ENCODE measurements at regions of chr17 and their contacts with region 1.

Region 1: DNA sequence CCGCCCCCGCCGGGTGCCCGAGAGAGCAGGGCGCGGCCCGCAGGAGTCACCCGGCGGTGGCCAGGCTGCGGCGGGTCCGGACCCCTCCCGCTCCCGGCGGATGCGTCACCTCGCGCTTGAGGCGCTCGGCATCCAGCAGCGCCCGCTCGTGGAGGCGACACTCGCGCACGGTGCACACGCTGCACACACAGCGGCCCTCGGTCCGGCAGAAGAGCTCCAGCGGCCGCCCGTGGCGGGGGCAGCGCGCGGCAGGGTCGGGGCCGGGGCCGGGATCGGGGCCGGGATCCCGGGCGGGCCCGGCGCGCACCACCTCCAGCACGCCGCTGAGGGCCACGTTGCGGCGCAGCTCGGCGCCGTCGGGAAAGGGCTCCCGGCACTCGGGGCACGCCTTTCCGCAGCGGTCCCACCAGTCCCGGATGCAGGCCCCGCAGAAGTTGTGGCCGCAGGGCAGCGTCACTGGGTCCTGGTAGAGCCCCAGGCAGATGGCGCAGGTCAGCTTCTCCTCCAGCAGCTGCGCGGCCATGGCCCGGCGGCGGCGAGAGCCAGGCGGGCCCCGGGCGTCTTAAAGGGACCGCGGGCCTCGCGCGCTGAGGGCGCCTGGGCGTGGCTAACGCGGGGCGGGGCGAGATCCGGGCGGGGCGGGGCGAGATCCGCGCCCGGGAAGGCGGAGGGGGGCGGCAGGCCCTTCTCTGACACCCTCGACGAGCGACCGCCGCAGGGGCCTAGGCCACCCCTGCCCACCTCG is at the start of gene TRIM65:
- DNase-seq: peak; percentile 80
- ATAC-seq: peak; percentile 88
- H3K4me3 Mint-ChIP-seq: peak within 1 kb of the TSS; percentile 82
- H3K27ac Mint-ChIP-seq: peak within 1 kb of the TSS; percentile 82
- H3K4me1 Mint-ChIP-seq: peaks cover 28% of the 10 kb centered on the region
- H3K27me3 Mint-ChIP-seq: no peaks in the 10 kb centered on the region
- total RNA-seq, gene TRIM65: 35.8 to 37.3 TPM

Region 2: GRCh38 chr17:75872434-75873351 is 23.9 kb before region 1 on chr17:
- CTCF ChIA-PET with region 1: interaction called, 80 read pairs
- POLR2A ChIA-PET with region 1: interaction called, 10 read pairs
- DNase-seq: peak; percentile 87
- ATAC-seq: peak; percentile 65
- H3K4me3 Mint-ChIP-seq: peak overlapping the region; percentile 42
- H3K27ac Mint-ChIP-seq: peak overlapping the region; percentile 95
- H3K4me1 Mint-ChIP-seq: peaks cover 40% of the 10 kb centered on the region
- H3K27me3 Mint-ChIP-seq: peaks cover 3% of the 10 kb centered on the region

Region 3: GRCh38 chr17:75877752-75878173 is 18.8 kb before region 1 on chr17:
- CTCF ChIA-PET with region 1: interaction called, 80 read pairs
- POLR2A ChIA-PET with region 1: interaction called, 10 read pairs
- DNase-seq: peak; percentile 82
- ATAC-seq: peak; percentile 77
- H3K4me3 Mint-ChIP-seq: peak overlapping the region; percentile 91
- H3K27ac Mint-ChIP-seq: peak overlapping the region; percentile 92
- H3K4me1 Mint-ChIP-seq: peaks cover 54% of the 10 kb centered on the region
- H3K27me3 Mint-ChIP-seq: peaks cover 8% of the 10 kb centered on the region

Region 4: GRCh38 chr17:75917141-75917916 is 20.7 kb after region 1 on chr17:
- CTCF ChIA-PET with region 1: no interaction called
- POLR2A ChIA-PET with region 1: no interaction called
- DNase-seq: no peak
- ATAC-seq: no peak
- H3K4me3 Mint-ChIP-seq: no peak overlapping the region
- H3K27ac Mint-ChIP-seq: peak overlapping the region; percentile 4
- H3K4me1 Mint-ChIP-seq: peaks cover 8% of the 10 kb centered on the region
- H3K27me3 Mint-ChIP-seq: no peaks in the 10 kb centered on the region